Activated CD4-positive, alpha-beta T cell treated with anti-CD3 and anti-CD28 coated beads for 36 hours (primary cell): ENCODE measurements at regions of chr17 and their contacts with region 1.

Region 1: GRCh38 chr17:67376737-67377487 is at the start of gene PITPNC1:
- DNase-seq: peak; percentile 94
- ATAC-seq: peak; percentile 74
- H3K4me3 Mint-ChIP-seq: peak within 1 kb of the TSS; percentile 83
- H3K27ac Mint-ChIP-seq: peak within 1 kb of the TSS; percentile 82
- H3K4me1 Mint-ChIP-seq: peaks cover 38% of the 10 kb centered on the region
- H3K27me3 Mint-ChIP-seq: no peaks in the 10 kb centered on the region
- total RNA-seq, gene PITPNC1: 41.6 to 56.3 TPM

Region 2: GRCh38 chr17:67280279-67280678 is 96.6 kb before region 1 on chr17:
- CTCF ChIA-PET with region 1: no interaction called
- POLR2A ChIA-PET with region 1: no interaction called
- intact Hi-C with region 1: no loop called
- DNase-seq: no peak
- ATAC-seq: no peak
- H3K4me3 Mint-ChIP-seq: no peak overlapping the region
- H3K27ac Mint-ChIP-seq: no peak overlapping the region
- H3K4me1 Mint-ChIP-seq: no peaks in the 10 kb centered on the region
- H3K27me3 Mint-ChIP-seq: no peaks in the 10 kb centered on the region

Region 3: GRCh38 chr17:67366193-67367157 is 10.4 kb before region 1 on chr17 and contains the start of gene PSMD12:
- CTCF ChIA-PET with region 1: interaction called, 35 read pairs
- POLR2A ChIA-PET with region 1: interaction called, 7 read pairs
- intact Hi-C with region 1: loop called (anchors 1 kb)
- DNase-seq: peak; percentile 96
- ATAC-seq: peak; percentile 78
- H3K4me3 Mint-ChIP-seq: peak within 1 kb of the TSS; percentile 94
- H3K27ac Mint-ChIP-seq: peak within 1 kb of the TSS; percentile 96
- H3K4me1 Mint-ChIP-seq: peaks cover 43% of the 10 kb centered on the region
- H3K27me3 Mint-ChIP-seq: no peaks in the 10 kb centered on the region
- total RNA-seq, gene PSMD12: 100 to 101 TPM

Region 4: DNA sequence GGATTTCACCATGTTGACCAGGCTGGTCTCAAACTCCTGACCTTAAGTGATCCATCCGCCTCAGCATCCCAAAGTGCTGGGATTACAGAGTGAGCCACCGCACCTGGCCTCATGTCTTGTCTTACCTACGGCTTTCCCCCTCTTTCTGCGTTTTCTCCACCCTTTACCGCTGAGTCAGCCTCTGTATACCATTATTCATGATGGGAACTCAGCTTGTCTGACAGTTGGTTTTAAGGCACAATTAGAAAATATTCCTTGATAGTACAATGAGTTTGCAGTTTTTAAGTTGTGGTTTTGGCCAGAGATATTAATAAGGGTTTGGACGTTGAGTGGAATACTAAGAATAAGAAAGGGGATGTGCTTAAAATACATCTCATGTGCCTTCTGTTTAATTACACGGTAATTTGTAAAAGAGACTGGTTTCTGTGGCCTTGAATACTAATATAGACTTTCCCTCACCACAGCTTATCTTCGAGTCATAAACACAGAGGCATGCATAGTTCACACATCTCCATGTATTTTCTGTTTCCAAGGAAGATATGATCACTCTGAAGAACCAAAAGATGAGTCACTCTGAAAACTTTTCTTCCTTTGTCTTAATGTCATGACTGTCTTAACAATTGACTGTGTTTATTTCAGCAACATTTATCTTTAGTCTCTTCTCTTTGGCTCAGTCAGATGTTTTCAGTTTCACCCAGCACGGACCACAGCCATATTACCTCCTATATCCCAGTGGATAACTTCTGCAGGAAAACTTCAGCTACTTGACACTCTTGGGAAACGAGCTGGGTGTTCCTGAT is 54.5 kb after region 1 on chr17:
- CTCF ChIA-PET with region 1: interaction called, 7 read pairs
- POLR2A ChIA-PET with region 1: interaction called, 3 read pairs
- intact Hi-C with region 1: loop called in 1 of 2 experiments (anchors 5 kb)
- DNase-seq: no peak
- ATAC-seq: peak; percentile 76
- H3K4me3 Mint-ChIP-seq: peak overlapping the region; percentile 9
- H3K27ac Mint-ChIP-seq: peak overlapping the region; percentile 89
- H3K4me1 Mint-ChIP-seq: peaks cover 74% of the 10 kb centered on the region
- H3K27me3 Mint-ChIP-seq: no peaks in the 10 kb centered on the region

Region 5: DNA sequence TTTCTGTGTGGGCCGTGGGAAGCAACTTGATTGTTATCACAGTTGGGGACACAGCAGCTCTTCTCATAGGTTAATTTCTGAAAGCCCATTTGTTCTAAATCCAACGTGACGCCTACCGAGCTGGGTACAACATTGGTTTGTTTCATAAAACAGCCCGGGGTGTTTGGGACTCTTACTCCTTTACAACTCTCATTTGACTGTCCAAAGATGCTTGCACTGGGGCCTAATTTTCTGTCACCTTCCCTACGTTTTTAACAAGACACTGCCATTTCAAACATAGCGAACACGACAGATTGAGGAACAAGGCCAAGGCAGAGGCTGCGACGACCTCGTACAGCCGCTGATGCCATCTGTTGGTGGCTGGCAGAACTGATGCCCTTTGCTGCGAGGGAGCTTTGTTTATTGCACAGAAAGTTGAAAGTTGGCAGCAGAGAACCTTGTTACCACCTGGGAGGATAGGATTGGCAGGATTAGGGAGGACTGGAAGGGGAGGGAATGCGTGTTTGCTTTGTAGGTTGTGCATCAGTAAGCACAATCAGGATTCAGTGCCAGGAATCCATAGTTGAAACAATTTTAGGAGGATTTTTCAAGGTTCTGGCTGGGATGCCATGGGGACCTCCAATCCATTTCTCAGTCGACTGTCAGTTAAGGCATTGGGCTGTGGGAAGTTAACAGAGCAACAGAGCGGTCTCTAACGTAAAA is 98.5 kb after region 1 on chr17:
- CTCF ChIA-PET with region 1: interaction called, 171 read pairs
- POLR2A ChIA-PET with region 1: interaction called, 10 read pairs
- intact Hi-C with region 1: loop called (anchors 1 kb)
- DNase-seq: peak; percentile 92
- ATAC-seq: peak; percentile 65
- H3K4me3 Mint-ChIP-seq: peak overlapping the region; percentile 65
- H3K27ac Mint-ChIP-seq: peak overlapping the region; percentile 91
- H3K4me1 Mint-ChIP-seq: peaks cover 66% of the 10 kb centered on the region
- H3K27me3 Mint-ChIP-seq: no peaks in the 10 kb centered on the region

Region 6: DNA sequence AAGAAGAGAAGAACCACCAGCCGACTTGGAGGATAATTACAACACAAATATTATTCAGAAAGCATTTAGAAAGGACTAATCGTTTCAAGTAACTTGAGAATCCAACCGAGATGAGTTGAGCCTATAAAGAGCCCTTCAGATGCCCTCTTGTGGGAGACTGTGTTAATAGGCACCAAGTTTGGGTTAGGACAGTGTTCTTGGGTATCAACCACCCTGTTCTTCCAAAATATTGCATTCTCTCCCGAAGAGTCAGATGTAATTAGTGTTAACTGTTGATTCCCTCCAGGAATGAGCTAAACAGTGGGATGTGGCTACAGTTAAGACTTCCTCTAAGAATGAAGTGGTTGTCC is 253.0 kb after region 1 on chr17:
- CTCF ChIA-PET with region 1: interaction called, 12 read pairs
- POLR2A ChIA-PET with region 1: no interaction called
- intact Hi-C with region 1: loop called (anchors 1 to 2 kb)
- DNase-seq: no peak
- ATAC-seq: no peak
- H3K4me3 Mint-ChIP-seq: no peak overlapping the region
- H3K27ac Mint-ChIP-seq: no peak overlapping the region
- H3K4me1 Mint-ChIP-seq: peaks cover 6% of the 10 kb centered on the region
- H3K27me3 Mint-ChIP-seq: no peaks in the 10 kb centered on the region

Region 7: DNA sequence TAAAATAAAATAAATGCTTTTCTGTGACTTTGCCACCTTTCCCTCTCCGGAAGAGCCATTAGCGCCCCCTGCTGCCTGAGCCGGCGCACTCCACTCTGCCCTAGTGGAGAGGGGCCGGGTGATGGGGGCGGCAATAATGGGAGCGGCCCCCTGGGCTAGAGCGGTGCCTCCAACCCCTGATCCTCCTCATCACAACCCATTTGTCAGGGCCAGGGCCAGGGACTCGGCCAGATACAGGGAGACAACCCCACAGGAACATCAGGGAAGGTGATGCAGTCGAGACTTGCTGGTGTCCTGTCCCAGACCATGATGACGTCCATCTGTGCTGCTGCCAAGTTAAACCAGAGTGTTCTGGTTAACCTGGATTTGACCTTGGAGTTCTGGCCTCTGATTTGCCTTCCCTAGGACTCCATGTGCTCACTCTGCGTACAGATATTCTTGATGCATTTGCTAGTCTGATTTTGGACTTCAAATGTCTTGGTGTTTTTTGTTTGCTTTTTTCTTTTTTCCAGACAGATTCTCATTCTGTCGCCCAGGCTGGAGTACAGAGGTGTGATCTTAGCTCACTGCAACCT is 402.3 kb after region 1 on chr17:
- CTCF ChIA-PET with region 1: no interaction called
- POLR2A ChIA-PET with region 1: no interaction called
- intact Hi-C with region 1: loop called in 1 of 2 experiments (anchors 2 kb)
- DNase-seq: peak; percentile 65
- ATAC-seq: peak; percentile 72
- H3K4me3 Mint-ChIP-seq: no peak overlapping the region
- H3K27ac Mint-ChIP-seq: no peak overlapping the region
- H3K4me1 Mint-ChIP-seq: no peaks in the 10 kb centered on the region
- H3K27me3 Mint-ChIP-seq: no peaks in the 10 kb centered on the region

Region 8: DNA sequence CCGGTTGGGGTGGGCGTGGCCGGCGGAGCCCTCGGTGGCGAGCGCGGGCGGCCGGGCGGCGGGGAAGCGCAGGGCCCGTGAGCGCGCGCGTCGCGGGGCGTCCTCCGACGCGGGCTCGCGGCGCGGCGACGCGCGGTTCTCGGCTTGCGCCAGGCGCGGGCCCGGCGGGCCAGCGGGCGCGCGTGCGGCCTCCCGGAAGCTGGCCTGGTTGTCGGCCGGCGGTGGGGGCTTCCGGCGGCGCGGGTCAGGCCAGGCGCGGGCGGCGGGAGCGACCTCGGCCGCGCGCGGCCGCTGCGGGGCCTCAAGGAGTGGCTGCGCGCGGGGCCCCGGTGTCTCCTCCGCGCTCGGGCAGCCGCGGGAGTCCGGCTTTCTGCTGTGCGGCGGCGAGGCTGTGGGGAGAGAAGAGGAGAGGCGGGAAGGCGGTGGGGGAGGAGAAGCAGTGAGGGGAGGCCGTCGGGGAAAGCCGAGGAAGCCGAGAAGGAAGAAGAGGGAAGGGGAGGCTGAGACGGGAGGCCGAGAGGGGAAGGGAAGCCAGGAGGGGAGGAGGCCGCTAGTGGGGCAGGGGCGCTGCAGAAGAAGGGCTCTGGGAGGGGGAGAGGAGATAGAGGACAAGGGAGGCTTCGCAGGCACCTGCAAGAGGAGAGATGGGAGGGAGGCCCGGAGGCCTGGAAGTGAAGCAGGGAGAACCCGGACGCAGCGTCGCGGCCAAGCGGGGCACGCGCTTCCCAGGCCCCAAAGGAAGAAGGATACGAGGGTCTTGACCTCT is 616.9 kb after region 1 on chr17:
- CTCF ChIA-PET with region 1: no interaction called
- POLR2A ChIA-PET with region 1: no interaction called
- intact Hi-C with region 1: loop called in 1 of 2 experiments (anchors 10 kb)
- DNase-seq: peak; percentile 84
- ATAC-seq: peak; percentile 57
- H3K4me3 Mint-ChIP-seq: peak overlapping the region; percentile 75
- H3K27ac Mint-ChIP-seq: peak overlapping the region; percentile 84
- H3K4me1 Mint-ChIP-seq: peaks cover 26% of the 10 kb centered on the region
- H3K27me3 Mint-ChIP-seq: peaks cover 13% of the 10 kb centered on the region